MCF 10A (cell line): ENCODE measurements at regions of chr14 and their contacts with region 1.

Region 1: DNA sequence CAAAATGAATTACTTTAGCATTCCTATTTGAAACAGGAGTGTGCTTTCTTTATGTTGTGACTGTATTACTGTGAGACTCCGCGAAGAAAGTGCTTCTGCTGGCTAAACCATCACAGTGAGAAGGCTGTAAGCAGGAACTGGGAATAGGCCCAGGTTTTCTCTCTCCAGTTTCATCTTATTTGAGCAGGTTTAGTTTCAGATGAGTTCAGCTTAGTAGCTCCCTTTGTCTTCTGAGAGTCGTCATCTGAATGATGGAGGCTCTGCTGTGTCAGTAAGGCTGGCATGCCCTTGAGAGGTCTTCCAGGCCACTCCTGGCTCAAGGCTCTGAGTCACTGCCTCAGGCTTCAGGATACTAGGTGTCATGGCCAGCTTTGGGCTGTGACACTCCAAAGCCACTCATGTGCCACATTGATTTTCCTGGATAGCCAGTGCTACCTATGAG is 205.6 kb upstream of the RGS6 start:
- DNase-seq: no peak
- H3K4me3 Mint-ChIP-seq: no peak overlapping the region
- H3K27ac Mint-ChIP-seq: no peak overlapping the region
- H3K4me1 Mint-ChIP-seq: peaks cover 13% of the 10 kb centered on the region
- H3K27me3 Mint-ChIP-seq: no peaks in the 10 kb centered on the region
- CTCF ChIP-seq: no peak

Region 2: GRCh38 chr14:71711619-71712018 is 15.0 kb before region 1 on chr14:
- CTCF ChIA-PET with region 1: no interaction called
- POLR2A ChIA-PET with region 1: interaction called, 4 read pairs
- intact Hi-C with region 1: loop called (anchors 1 kb)
- DNase-seq: peak; percentile 76
- H3K4me3 Mint-ChIP-seq: peak overlapping the region; percentile 38
- H3K27ac Mint-ChIP-seq: peak overlapping the region; percentile 66
- H3K4me1 Mint-ChIP-seq: peaks cover 36% of the 10 kb centered on the region
- H3K27me3 Mint-ChIP-seq: no peaks in the 10 kb centered on the region
- CTCF ChIP-seq: no peak